ENCODE measurements at regions of chr15 and their contacts with region 1.

Region 1: GRCh38 chr15:65054333-65055200 is 9.4 kb downstream of the SLC51B start:
- DNase-seq: peak; percentile 64
- ATAC-seq: peak; percentile 75
- H3K4me3 ChIP-seq: no peak overlapping the region
- H3K27ac ChIP-seq: no peak overlapping the region
- H3K4me1 ChIP-seq: peaks cover 70% of the 10 kb centered on the region
- H3K27me3 ChIP-seq: no peaks in the 10 kb centered on the region
- CTCF ChIP-seq: peak; percentile 98
- EP300 ChIP-seq: no peak
- POLR2A ChIP-seq: no peak
- RAD21 ChIP-seq: peak; percentile 98

Region 2: GRCh38 chr15:64989416-64990167 is 65.0 kb before region 1 on chr15 and contains the start of gene SPG21:
- CTCF ChIA-PET with region 1: no interaction called
- POLR2A ChIA-PET with region 1: no interaction called
- in situ Hi-C with region 1: no loop called
- intact Hi-C with region 1: loop called (anchors 5 kb)
- DNase-seq: peak; percentile 73
- ATAC-seq: peak; percentile 91
- H3K4me3 ChIP-seq: peak within 1 kb of the TSS; percentile 60 to 100 (median 84)
- H3K27ac ChIP-seq: peak within 1 kb of the TSS; percentile 82
- H3K4me1 ChIP-seq: peaks cover 54% of the 10 kb centered on the region
- H3K27me3 ChIP-seq: no peaks in the 10 kb centered on the region; a peak in 1 of 5 replicates
- CTCF ChIP-seq: no peak
- EP300 ChIP-seq: no peak
- POLR2A ChIP-seq: peak; percentile 40 to 53; a peak in 3 of 4 replicates
- RAD21 ChIP-seq: no peak; the same call in 1 of the 2 replicates
- total RNA-seq, gene SPG21: 42.4 and 53.0 TPM in 2 replicates

Region 3: DNA sequence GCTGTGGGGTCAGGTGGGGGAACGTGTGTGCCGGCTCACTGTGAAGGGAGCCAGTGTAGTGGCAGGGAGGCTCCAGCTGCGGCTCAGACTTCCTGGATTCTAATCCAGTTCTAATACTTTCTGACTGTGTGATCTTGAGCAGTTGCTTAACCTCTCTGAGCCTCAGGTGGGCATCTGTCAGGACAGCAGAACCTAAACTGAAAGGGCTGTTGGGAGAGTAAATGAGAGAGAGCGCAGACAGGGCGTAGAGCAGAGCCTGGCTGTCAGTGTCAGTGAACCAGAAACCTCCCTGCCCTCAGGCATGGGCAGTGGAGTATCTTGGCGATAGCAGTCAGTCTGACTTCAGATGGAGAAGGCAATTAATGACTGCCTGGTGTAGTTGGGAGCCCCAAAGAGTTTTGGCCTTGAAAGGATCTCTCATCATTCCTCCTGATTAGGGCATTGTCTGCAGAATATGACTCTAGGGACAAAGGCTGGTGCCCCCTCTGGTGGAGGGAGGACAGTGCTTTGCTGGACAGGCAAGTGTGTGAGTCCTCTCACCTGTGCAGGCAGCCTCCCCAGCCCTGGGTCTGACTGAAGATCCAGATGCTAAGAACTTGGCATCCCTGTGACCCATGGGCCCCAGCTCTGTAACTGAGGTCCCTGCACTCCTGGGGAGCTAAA is 31.6 kb after region 1 on chr15:
- CTCF ChIA-PET with region 1: interaction called, 54 read pairs
- POLR2A ChIA-PET with region 1: interaction called, 27 read pairs
- in situ Hi-C with region 1: loop called (anchors 5 kb)
- intact Hi-C with region 1: loop called (anchors 1 kb)
- DNase-seq: peak; percentile 72
- ATAC-seq: peak; percentile 76
- H3K4me3 ChIP-seq: no peak overlapping the region; a peak in 1 of 6 replicates
- H3K27ac ChIP-seq: no peak overlapping the region
- H3K4me1 ChIP-seq: peaks cover 96% of the 10 kb centered on the region
- H3K27me3 ChIP-seq: peaks cover 0 to 21% of the 10 kb centered on the region in 2 experiments; a peak in 2 of 5 replicates
- CTCF ChIP-seq: peak; percentile 88
- EP300 ChIP-seq: no peak
- POLR2A ChIP-seq: no peak
- RAD21 ChIP-seq: peak; percentile 60

Region 4: DNA sequence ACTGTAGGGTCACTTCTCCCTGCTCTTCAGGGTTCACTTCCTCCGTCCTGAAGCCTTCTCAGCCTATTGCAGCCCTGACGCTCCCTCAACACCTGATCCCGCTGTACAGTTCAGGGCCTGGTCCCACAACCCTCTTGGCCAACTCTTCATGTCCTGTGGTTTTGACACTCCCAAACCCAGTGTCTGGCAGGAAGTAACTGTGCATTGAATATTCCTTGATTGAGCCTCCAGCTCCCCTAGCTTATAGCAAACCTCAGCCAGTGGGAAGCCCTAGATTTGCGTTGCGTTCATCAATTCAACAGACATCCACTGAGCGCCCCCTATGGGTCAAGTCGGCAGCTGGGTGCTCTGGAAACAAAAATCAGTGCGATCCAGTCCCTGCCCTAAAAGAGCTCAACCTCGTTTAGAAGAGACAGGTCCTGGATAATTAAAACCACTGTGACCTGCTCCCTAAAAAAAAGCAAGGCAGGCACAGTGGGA is 46.9 kb after region 1 on chr15:
- CTCF ChIA-PET with region 1: interaction called, 29 read pairs
- POLR2A ChIA-PET with region 1: interaction called, 4 read pairs
- in situ Hi-C with region 1: no loop called
- intact Hi-C with region 1: loop called (anchors 1 kb)
- DNase-seq: peak; percentile 50
- ATAC-seq: peak; percentile 76
- H3K4me3 ChIP-seq: no peak overlapping the region
- H3K27ac ChIP-seq: no peak overlapping the region
- H3K4me1 ChIP-seq: no peaks in the 10 kb centered on the region
- H3K27me3 ChIP-seq: no peaks in the 10 kb centered on the region
- CTCF ChIP-seq: peak; percentile 88
- EP300 ChIP-seq: no peak
- POLR2A ChIP-seq: no peak
- RAD21 ChIP-seq: peak; percentile 88

Region 5: GRCh38 chr15:65292938-65293518 is 238.5 kb after region 1 on chr15:
- CTCF ChIA-PET with region 1: no interaction called
- POLR2A ChIA-PET with region 1: no interaction called
- in situ Hi-C with region 1: no loop called
- intact Hi-C with region 1: loop called (anchors 10 kb)
- DNase-seq: peak; percentile 45
- ATAC-seq: no peak
- H3K4me3 ChIP-seq: no peak overlapping the region
- H3K27ac ChIP-seq: no peak overlapping the region
- H3K4me1 ChIP-seq: peaks cover 44% of the 10 kb centered on the region
- H3K27me3 ChIP-seq: no peaks in the 10 kb centered on the region
- CTCF ChIP-seq: no peak
- EP300 ChIP-seq: no peak
- POLR2A ChIP-seq: no peak
- RAD21 ChIP-seq: no peak

Region 6: GRCh38 chr15:65344214-65344917 is 289.8 kb after region 1 on chr15:
- CTCF ChIA-PET with region 1: no interaction called
- POLR2A ChIA-PET with region 1: no interaction called
- in situ Hi-C with region 1: no loop called
- intact Hi-C with region 1: no loop called
- DNase-seq: no peak
- ATAC-seq: no peak
- H3K4me3 ChIP-seq: no peak overlapping the region
- H3K27ac ChIP-seq: no peak overlapping the region
- H3K4me1 ChIP-seq: peaks cover 55% of the 10 kb centered on the region
- H3K27me3 ChIP-seq: no peaks in the 10 kb centered on the region
- CTCF ChIP-seq: no peak
- EP300 ChIP-seq: no peak
- POLR2A ChIP-seq: no peak
- RAD21 ChIP-seq: no peak

Measured in HepG2 (cell line).